ENCODE measurements at regions of chr4 and their contacts with region 1.

Region 1: GRCh38 chr4:21512353-21512752 is 436.2 kb downstream of the KCNIP4 start:
- DNase-seq: peak; percentile 5
- CTCF ChIP-seq: no peak

Region 2: DNA sequence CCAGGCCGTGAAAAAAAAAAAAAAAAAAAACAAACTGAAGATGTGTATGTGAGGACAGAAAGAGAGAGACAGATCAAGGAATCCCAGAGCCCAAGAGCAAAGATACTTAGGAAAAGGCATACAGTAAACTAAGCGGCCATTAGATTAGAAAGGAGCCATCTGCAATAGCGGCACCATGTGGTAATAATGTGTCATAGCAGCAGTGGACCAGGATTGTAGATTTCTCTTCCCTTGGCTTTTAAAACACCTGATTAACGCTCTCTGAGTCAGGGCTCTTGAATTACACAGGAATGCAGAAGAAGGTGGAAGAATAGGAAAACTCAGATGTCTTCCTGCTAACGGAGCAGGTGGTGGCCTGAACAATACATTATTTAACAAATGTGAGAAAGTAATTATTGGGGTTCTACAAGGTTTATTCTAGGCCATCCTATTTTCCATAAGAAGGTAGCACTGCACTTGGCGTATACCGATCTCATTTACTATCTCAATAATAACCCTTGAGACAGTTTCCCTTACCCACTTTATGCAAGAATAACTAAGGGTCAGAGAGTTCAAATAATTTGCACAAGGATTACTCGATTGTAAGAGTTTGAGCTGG is 253.6 kb after region 1 on chr4:
- in situ Hi-C with region 1: loop called (anchors 10 kb)
- DNase-seq: peak; percentile 8
- CTCF ChIP-seq: peak; percentile 74

Region 3: GRCh38 chr4:21948347-21949072 is 436.2 kb after region 1 on chr4 and contains the start of gene KCNIP4:
- in situ Hi-C with region 1: no loop called
- DNase-seq: no peak
- CTCF ChIP-seq: no peak

Region 4: DNA sequence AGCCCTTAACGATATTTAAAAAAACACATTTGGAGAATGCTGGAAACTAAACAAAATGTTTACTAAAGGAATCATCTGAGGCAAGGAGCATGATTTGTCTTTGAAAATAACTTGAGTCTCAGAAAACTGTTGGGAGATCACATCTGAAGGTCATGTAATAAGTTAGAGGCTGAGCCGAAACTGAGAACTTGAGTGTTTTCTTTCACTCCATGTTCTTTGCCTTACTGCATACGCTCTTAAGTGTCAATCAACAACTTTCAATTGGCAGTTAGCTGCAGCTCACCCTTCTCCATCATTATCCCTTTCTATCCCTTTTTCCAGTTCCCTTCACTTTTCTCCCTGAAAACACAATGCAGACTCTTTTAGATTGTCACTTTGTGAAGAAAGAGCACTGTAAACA is 787.3 kb after region 1 on chr4:
- in situ Hi-C with region 1: no loop called
- DNase-seq: no peak
- CTCF ChIP-seq: no peak

Measured in GM13976 (cell line).